ENCODE measurements at regions of chr1 and their contacts with region 1.

Region 1: GRCh38 chr1:175373786-175374623 is 181.4 kb upstream of the KIAA0040 start:
- DNase-seq: peak; percentile 13
- ATAC-seq: peak; percentile 87
- H3K4me3 ChIP-seq: no peak overlapping the region
- H3K27ac ChIP-seq: no peak overlapping the region
- H3K4me1 ChIP-seq: no peaks in the 10 kb centered on the region
- H3K27me3 ChIP-seq: peaks cover 49% of the 10 kb centered on the region; the same call in 1 of the 2 replicates
- CTCF ChIP-seq: peak; percentile 65 to 86 (median 85)
- POLR2A ChIP-seq: no peak
- RAD21 ChIP-seq: peak; percentile 81

Region 2: GRCh38 chr1:175742790-175743459 is 368.9 kb after region 1 on chr1:
- CTCF ChIA-PET with region 1: interaction called, 7 read pairs
- POLR2A ChIA-PET with region 1: no interaction called
- RAD21 ChIA-PET with region 1: no interaction called
- intact Hi-C with region 1: loop called (anchors 5 kb)
- DNase-seq: no peak
- ATAC-seq: peak; percentile 38; the same call in 1 of the 2 replicates
- H3K4me3 ChIP-seq: no peak overlapping the region
- H3K27ac ChIP-seq: no peak overlapping the region
- H3K4me1 ChIP-seq: no peaks in the 10 kb centered on the region
- H3K27me3 ChIP-seq: peaks cover 27% of the 10 kb centered on the region; the same call in 1 of the 2 replicates
- CTCF ChIP-seq: no peak
- POLR2A ChIP-seq: no peak
- RAD21 ChIP-seq: no peak

Region 3: DNA sequence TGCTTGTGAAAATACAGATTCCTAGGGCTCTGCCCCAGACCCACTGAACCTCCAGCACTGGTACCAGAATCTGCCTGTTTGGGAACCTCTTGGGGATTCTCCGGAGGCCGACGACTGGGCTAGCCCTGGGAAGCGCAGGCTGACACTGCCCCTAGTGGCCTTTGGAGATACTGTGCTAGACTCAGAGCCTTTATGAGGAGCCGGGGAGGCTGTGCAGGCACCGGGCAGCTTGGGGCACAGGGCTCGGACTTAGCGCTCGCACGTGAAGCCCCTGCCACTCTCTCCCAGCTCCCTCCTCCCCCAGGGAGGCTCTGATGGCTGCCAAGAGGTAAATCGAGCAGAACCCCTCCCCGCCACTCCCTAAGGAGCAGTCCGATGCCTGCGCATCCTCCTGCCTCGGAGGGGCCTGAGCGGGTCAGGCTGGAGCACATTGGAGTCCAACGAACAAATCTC is 514.0 kb after region 1 on chr1:
- CTCF ChIA-PET with region 1: interaction called, 3 read pairs
- POLR2A ChIA-PET with region 1: no interaction called
- RAD21 ChIA-PET with region 1: no interaction called
- intact Hi-C with region 1: loop called (anchors 1 kb)
- DNase-seq: peak; percentile 21
- ATAC-seq: peak; percentile 99
- H3K4me3 ChIP-seq: no peak overlapping the region
- H3K27ac ChIP-seq: no peak overlapping the region
- H3K4me1 ChIP-seq: no peaks in the 10 kb centered on the region; a peak in 1 of 4 replicates
- H3K27me3 ChIP-seq: no peaks in the 10 kb centered on the region
- CTCF ChIP-seq: peak; percentile 36 to 86 (median 76); a peak in 4 of 6 replicates
- POLR2A ChIP-seq: no peak
- RAD21 ChIP-seq: peak; percentile 62

Region 4: DNA sequence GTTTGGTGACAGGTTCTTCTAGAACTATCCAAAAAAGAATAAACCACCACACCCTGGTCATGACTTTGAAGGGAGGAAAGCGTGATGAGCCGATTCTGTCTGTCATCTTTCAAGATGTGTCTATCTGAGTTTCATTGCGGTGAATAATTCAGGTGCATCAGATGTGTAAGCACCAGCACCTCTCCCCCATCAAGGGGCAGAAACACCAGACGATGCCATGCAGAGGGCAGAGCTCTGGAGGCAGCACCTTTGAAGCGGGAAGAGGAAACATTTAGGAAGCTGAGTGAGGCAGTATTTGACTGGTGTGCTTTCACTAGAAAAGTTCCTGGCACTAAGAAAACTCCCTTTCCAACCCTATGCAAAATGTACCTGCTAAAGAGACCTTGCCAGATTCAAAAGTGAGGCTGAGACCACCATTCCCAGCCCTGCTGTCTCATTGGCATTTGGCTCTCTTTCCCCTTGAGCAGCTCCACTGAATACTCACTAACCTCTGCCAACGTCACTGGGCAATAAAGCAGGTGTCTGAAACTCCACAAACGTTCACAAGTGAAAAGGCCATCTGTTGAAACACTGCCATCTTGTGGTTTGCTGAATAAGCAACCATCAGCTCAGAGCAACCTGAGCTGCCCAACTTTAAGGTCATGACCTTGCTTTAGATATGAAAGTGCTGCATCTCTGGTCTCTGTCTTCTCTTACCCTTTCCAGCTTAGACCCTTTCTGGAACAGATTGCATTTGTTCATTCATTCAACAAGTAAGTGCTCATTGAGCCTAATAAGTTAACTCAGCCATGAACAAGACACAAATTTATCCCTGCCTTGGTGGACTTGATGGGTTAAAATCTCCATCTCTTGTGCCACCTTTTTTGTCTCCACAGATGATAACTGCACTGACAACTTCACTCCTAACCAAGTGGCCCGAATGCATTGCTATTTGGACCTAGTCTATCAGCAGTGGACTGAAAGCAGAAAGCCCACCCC is 1317.5 kb after region 1 on chr1:
- CTCF ChIA-PET with region 1: no interaction called
- POLR2A ChIA-PET with region 1: no interaction called
- RAD21 ChIA-PET with region 1: no interaction called
- intact Hi-C with region 1: loop called (anchors 10 kb)
- DNase-seq: peak; percentile 47
- ATAC-seq: peak; percentile 82
- H3K4me3 ChIP-seq: no peak overlapping the region
- H3K27ac ChIP-seq: no peak overlapping the region
- H3K4me1 ChIP-seq: peaks cover 0 to 5% of the 10 kb centered on the region in 2 experiments; a peak in 1 of 4 replicates
- H3K27me3 ChIP-seq: peaks cover 30% of the 10 kb centered on the region
- CTCF ChIP-seq: peak; percentile 49 to 69 (median 68); a peak in 5 of 6 replicates
- POLR2A ChIP-seq: no peak
- RAD21 ChIP-seq: peak; percentile 63